Transverse colon (tissue), 4 donors: ENCODE measurements at regions of chr12 and their contacts with region 1.

Region 1: GRCh38 chr12:81627336-81628189 is 131.6 kb downstream of the PPFIA2 start:
- DNase-seq: no peak
- H3K4me3 ChIP-seq: no peak overlapping the region
- H3K27ac ChIP-seq: no peak overlapping the region
- H3K4me1 ChIP-seq: no peaks in the 10 kb centered on the region
- H3K27me3 ChIP-seq: no peaks in the 10 kb centered on the region
- CTCF ChIP-seq: peak; percentile 33 to 52 (median 44)
- EP300 ChIP-seq: no peak
- POLR2A ChIP-seq: no peak

Region 2: DNA sequence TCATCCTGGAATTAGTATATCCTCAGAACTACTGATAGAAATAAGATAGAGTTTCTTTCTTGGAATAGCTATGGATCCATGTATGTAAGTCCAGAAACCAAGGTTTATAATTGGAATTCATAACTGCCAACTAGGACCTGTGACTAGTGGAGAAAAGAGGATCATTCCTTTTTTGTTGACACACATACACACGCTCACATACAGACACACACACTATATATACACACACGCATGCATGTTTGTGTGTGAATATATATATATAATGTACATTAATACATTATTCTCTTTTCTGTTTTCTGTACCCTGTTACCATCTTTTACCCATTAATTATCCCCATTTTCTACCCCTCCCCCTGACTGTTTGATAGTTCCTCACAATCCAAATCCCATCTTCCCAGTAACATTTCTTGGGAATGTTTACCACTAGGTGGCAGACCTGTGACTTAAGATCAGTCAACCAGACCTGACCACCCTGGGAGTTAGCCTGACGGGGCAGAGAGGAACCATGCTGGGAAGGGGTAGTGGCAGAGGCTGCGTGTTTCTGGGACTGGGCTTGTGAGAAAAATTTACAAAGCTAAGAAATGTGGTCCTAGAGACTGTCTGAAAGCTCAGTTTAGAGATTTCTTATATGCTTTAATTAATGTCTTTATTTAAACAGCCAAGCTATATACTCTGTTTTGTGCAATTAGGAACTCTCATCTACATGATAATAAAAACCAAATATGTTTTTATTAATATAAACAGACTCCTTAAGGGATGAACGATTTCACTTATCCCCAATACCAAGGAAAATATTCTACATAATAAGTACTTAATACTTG is 176.4 kb before region 1 on chr12:
- in situ Hi-C with region 1: loop called in 2 of 4 experiments (anchors 5 to 25 kb)
- intact Hi-C with region 1: no loop called
- DNase-seq: no peak
- H3K4me3 ChIP-seq: no peak overlapping the region
- H3K27ac ChIP-seq: no peak overlapping the region
- H3K4me1 ChIP-seq: no peaks in the 10 kb centered on the region
- H3K27me3 ChIP-seq: no peaks in the 10 kb centered on the region
- CTCF ChIP-seq: peak; percentile 39 to 51 (median 43)
- EP300 ChIP-seq: no peak
- POLR2A ChIP-seq: no peak

Region 3: GRCh38 chr12:81692008-81692407 is 64.4 kb after region 1 on chr12:
- in situ Hi-C with region 1: no loop called
- intact Hi-C with region 1: no loop called
- DNase-seq: no peak
- H3K4me3 ChIP-seq: no peak overlapping the region
- H3K27ac ChIP-seq: no peak overlapping the region
- H3K4me1 ChIP-seq: no peaks in the 10 kb centered on the region
- H3K27me3 ChIP-seq: no peaks in the 10 kb centered on the region
- CTCF ChIP-seq: no peak
- EP300 ChIP-seq: no peak
- POLR2A ChIP-seq: no peak